ENCODE measurements at regions of chr9 and their contacts with region 1.

Region 1: GRCh38 chr9:36136272-36136893 is at the start of gene GLIPR2:
- DNase-seq: peak; percentile 73 to 84 (median 75)
- H3K4me3 ChIP-seq: peak within 1 kb of the TSS; percentile 86 to 98 (median 96)
- H3K4me3 Mint-ChIP-seq: peak within 1 kb of the TSS; percentile 100
- H3K27ac ChIP-seq: peak within 1 kb of the TSS; percentile 75 to 99
- H3K27ac Mint-ChIP-seq: peak within 1 kb of the TSS; percentile 94 to 98 (median 96)
- H3K4me1 ChIP-seq: peaks cover 51 to 62% of the 10 kb centered on the region in 2 donors
- H3K4me1 Mint-ChIP-seq: peaks cover 57% of the 10 kb centered on the region
- H3K27me3 ChIP-seq: no peaks in the 10 kb centered on the region
- H3K27me3 Mint-ChIP-seq: peaks cover 0 to 3% (median 0%) of the 10 kb centered on the region in 3 donors
- CTCF ChIP-seq: peak; percentile 69
- polyA plus RNA-seq, gene GLIPR2: 213 to 528 (median 520) TPM

Region 2: DNA sequence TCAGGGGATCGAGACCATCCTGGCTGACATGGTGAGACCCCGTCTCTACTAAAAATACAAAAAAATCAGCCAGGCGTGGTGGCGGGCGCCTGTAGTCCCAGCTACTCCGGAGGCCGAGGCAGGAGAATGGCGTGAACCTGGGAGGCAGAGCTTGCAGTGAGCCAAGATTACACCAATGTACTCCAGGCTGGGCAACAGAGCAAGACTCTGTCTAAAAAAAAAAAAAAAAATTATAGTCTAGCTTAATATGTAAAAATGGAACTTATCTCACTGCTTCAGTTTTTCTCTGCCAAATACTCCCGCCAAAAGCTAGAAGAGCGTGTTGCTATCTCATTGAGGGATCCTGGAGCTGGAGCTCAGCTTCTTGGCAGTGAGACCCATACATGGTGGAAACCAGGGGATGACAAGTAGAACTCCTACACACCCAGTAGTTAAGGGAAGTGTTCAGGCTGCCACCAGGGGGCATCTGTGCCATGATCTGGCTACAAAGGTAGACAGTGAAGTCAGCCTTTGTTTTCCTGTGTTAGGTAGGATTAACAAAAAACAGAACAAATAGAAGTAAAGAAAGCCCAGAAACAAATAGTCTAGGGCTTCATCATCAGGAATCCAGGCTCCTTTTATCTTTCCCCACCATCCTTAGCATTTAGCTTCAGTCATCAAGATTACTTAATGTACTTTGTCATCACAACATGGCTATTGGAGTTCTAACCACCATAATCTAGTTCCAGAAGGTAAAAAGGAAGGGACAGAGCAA is 33.5 kb before region 1 on chr9:
- intact Hi-C with region 1: loop called (anchors 5 kb)
- DNase-seq: peak; percentile 79 to 87 (median 83)
- H3K4me3 ChIP-seq: no peak overlapping the region
- H3K4me3 Mint-ChIP-seq: no peak overlapping the region
- H3K27ac ChIP-seq: peak overlapping the region in 1 of 2 donors; percentile 2
- H3K27ac Mint-ChIP-seq: peak overlapping the region in 5 of 7 donors; percentile 23 to 64 (median 55)
- H3K4me1 ChIP-seq: peaks cover 7% of the 10 kb centered on the region in 2 donors
- H3K4me1 Mint-ChIP-seq: peaks cover 8% of the 10 kb centered on the region
- H3K27me3 ChIP-seq: no peaks in the 10 kb centered on the region
- H3K27me3 Mint-ChIP-seq: peaks cover 0 to 3% (median 2%) of the 10 kb centered on the region in 3 donors
- CTCF ChIP-seq: peak; percentile 90

Region 3: GRCh38 chr9:36151316-36152210 is 15.2 kb after region 1 on chr9:
- intact Hi-C with region 1: loop called in 1 of 2 experiments (anchors 2 kb)
- DNase-seq: peak; percentile 94 to 97 (median 97)
- H3K4me3 ChIP-seq: peak overlapping the region in 2 of 3 experiments; percentile 19 to 52
- H3K4me3 Mint-ChIP-seq: peak overlapping the region; percentile 62 to 87
- H3K27ac ChIP-seq: peak overlapping the region; percentile 97 to 99
- H3K27ac Mint-ChIP-seq: peak overlapping the region; percentile 98 to 100 (median 100)
- H3K4me1 ChIP-seq: peaks cover 91 to 92% of the 10 kb centered on the region in 2 donors
- H3K4me1 Mint-ChIP-seq: peaks cover 82% of the 10 kb centered on the region
- H3K27me3 ChIP-seq: no peaks in the 10 kb centered on the region
- H3K27me3 Mint-ChIP-seq: peaks cover 0 to 2% (median 0%) of the 10 kb centered on the region in 3 donors
- CTCF ChIP-seq: no peak

Measured in CD14-positive monocyte (primary cell).